OCI-LY7 (cell line): ENCODE measurements at regions of chr16 and their contacts with region 1.

Region 1: GRCh38 chr16:57519796-57520360 is 16.5 kb downstream of the CCDC102A start:
- DNase-seq: peak; percentile 79
- H3K4me3 ChIP-seq: no peak overlapping the region
- H3K27ac ChIP-seq: no peak overlapping the region
- H3K4me1 ChIP-seq: peaks cover 21% of the 10 kb centered on the region
- CTCF ChIP-seq: peak; percentile 99

Region 2: GRCh38 chr16:57422026-57422944 is 97.6 kb before region 1 on chr16:
- CTCF ChIA-PET with region 1: interaction called, 6 read pairs
- POLR2A ChIA-PET with region 1: no interaction called
- intact Hi-C with region 1: loop called (anchors 1 kb)
- DNase-seq: peak; percentile 23
- H3K4me3 ChIP-seq: no peak overlapping the region
- H3K27ac ChIP-seq: no peak overlapping the region
- H3K4me1 ChIP-seq: peaks cover 10% of the 10 kb centered on the region
- CTCF ChIP-seq: peak; percentile 70

Region 3: DNA sequence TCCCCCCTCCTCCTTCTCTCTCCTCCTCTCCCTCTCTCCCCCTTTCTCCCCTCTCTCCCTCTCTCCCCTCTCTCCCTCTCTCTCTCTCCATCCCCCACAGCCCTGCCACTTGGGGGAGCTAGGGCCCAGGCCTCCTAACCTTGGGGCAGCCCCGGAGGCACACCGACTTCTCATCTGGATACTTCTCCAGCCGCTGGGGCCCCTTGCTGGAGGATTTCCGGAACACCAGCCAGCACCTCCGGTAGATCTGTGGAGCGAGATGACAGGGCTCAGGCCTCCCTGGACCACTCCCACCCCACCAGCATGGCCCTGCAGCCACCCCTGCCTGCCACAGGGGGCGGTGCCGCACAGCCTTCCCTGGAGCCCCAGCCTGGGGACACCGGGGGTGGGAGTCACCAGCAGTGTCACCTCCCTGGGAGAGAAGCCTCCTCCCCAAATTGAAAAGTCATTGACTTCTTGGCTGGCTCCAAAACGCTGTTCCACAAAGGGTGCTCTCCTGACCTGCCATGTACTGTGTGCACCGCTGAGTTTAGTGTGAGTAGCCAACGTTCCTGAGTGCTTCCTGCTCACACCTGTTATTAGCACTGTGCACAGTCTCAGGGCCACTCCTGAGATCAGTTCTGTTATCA is 44.1 kb before region 1 on chr16:
- CTCF ChIA-PET with region 1: no interaction called
- POLR2A ChIA-PET with region 1: interaction called, 3 read pairs
- intact Hi-C with region 1: loop called (anchors 5 kb)
- DNase-seq: peak; percentile 80
- H3K4me3 ChIP-seq: peak overlapping the region; percentile 18
- H3K27ac ChIP-seq: no peak overlapping the region
- H3K4me1 ChIP-seq: peaks cover 31% of the 10 kb centered on the region
- CTCF ChIP-seq: peak; percentile 90

Region 4: DNA sequence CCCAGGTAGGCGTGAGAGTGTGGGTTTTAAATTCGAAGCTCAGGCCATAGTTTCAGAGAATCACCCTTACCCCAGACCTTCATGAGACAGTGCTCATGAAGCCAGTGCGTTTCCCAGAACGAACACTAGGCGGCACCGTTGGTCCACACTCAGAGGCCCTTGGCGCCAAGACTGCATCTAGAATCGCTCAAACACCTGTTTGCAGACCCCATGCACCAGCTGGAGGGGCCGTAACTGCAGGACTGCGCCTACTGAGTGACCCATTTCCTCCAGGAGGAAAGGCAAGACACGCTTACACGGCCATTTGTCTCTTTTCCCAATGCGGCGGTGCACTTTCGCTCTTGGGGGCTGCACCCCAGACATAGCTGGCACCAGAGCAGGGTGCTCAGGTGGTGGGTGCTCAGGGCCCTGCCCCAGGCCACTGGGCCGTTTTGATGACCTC is 56.6 kb after region 1 on chr16:
- CTCF ChIA-PET with region 1: no interaction called
- POLR2A ChIA-PET with region 1: no interaction called
- intact Hi-C with region 1: no loop called
- DNase-seq: peak; percentile 80
- H3K4me3 ChIP-seq: no peak overlapping the region
- H3K27ac ChIP-seq: no peak overlapping the region
- H3K4me1 ChIP-seq: no peaks in the 10 kb centered on the region
- CTCF ChIP-seq: peak; percentile 90